ENCODE measurements at regions of chr17 and their contacts with region 1.

Region 1: GRCh38 chr17:34980681-34981537 is 597 bp downstream of the LIG3 start:
- DNase-seq: peak; percentile 91
- H3K4me3 ChIP-seq: peak overlapping the region; percentile 74 to 80 (median 77)
- H3K27ac ChIP-seq: peak overlapping the region; percentile 94 to 98 (median 96)
- H3K4me1 ChIP-seq: peaks cover 0 to 36% (median 28%) of the 10 kb centered on the region in 4 donors
- H3K27me3 ChIP-seq: no peaks in the 10 kb centered on the region
- CTCF ChIP-seq: peak in 3 of 4 experiments; percentile 5 to 25 (median 23)
- EP300 ChIP-seq: no peak
- POLR2A ChIP-seq: peak in 1 of 2 donors; percentile 48

Region 2: DNA sequence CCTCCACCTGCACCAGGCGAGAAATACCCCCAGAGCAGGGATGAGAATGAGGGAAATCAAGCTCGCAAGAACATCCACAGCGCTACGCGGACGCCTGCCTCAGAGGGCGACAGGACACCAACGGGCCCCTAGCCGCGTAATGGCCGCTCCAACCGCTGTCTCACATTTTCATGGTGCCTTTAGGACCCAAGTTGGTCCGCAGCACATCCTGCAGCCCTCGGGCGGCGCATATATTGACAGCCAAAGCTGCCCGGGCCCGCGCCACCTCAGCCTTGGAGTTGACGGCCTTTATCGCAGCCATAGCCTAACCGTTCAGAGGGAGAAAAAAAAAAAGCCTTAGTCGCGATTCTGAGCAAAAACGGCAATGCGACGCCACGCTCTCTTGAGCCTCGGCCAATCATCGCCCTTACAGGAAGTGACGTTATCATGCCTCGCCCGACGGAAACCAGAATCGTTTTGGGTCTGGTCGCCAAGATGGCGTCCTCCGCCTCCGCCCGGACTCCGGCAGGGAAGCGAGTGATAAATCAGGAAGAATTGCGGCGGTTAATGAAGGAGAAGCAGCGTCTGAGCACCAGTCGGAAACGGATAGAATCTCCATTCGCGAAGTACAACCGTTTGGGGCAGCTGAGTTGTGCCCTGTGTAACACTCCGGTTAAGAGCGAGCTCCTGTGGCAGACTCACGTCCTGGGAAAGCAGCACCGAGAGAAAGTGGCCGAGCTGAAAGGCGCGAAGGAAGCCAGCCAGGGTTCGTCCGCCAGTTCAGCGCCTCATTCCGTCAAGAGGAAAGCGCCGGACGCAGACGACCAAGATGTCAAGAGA is 19.6 kb before region 1 on chr17 and contains the starts of genes CCT6B and ZNF830:
- intact Hi-C with region 1: loop called (anchors 1 kb)
- DNase-seq: peak; percentile 97
- H3K4me3 ChIP-seq: peak within 1 kb of the TSS; percentile 87 to 91 (median 88)
- H3K27ac ChIP-seq: peak within 1 kb of the TSS; percentile 93 to 96 (median 94)
- H3K4me1 ChIP-seq: peaks cover 0 to 27% (median 20%) of the 10 kb centered on the region in 4 donors
- H3K27me3 ChIP-seq: no peaks in the 10 kb centered on the region
- CTCF ChIP-seq: no peak
- EP300 ChIP-seq: no peak
- POLR2A ChIP-seq: peak; percentile 53 to 62
- total RNA-seq, gene CCT6B: 3.3 to 4.3 (median 3.5) TPM
- total RNA-seq, gene ZNF830: 8.6 to 14.3 (median 12.8) TPM

Region 3: DNA sequence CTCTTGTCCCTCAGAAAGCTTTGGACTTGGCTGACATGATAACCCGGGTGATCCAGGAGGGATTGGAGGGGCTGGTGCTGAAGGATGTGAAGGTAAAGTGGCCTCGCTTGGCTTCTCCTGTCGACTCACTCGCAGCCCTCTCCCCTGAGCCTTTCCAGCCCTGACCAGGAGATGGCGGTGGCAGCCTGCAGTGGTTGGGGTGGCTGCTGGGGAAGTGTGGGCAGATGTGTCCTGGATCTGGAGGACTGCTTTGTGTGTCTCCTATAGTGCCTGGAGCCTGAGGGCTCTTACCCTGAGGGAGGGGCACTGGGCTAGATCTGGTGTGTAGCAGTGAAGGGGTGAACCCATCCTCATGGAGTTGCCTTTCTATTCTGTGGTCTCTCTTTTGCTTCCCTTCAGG is 17.3 kb after region 1 on chr17:
- intact Hi-C with region 1: loop called (anchors 2 kb)
- DNase-seq: peak; percentile 89
- H3K4me3 ChIP-seq: peak overlapping the region in 2 of 4 donors; percentile 4 to 13
- H3K27ac ChIP-seq: peak overlapping the region; percentile 86 to 92 (median 89)
- H3K4me1 ChIP-seq: peaks cover 0 to 69% (median 57%) of the 10 kb centered on the region in 4 donors
- H3K27me3 ChIP-seq: no peaks in the 10 kb centered on the region
- CTCF ChIP-seq: peak; percentile 74 to 87 (median 79)
- EP300 ChIP-seq: no peak
- POLR2A ChIP-seq: no peak

Region 4: GRCh38 chr17:35568541-35568940 is 587.6 kb after region 1 on chr17:
- intact Hi-C with region 1: loop called (anchors 2 kb)
- DNase-seq: no peak
- H3K4me3 ChIP-seq: peak overlapping the region; percentile 51 to 70 (median 62)
- H3K27ac ChIP-seq: peak overlapping the region; percentile 84 to 87 (median 85)
- H3K4me1 ChIP-seq: peaks cover 0 to 30% (median 24%) of the 10 kb centered on the region in 4 donors
- H3K27me3 ChIP-seq: no peaks in the 10 kb centered on the region
- CTCF ChIP-seq: no peak
- EP300 ChIP-seq: no peak
- POLR2A ChIP-seq: no peak